ENCODE measurements at regions of chr16 and their contacts with region 1.

Region 1: DNA sequence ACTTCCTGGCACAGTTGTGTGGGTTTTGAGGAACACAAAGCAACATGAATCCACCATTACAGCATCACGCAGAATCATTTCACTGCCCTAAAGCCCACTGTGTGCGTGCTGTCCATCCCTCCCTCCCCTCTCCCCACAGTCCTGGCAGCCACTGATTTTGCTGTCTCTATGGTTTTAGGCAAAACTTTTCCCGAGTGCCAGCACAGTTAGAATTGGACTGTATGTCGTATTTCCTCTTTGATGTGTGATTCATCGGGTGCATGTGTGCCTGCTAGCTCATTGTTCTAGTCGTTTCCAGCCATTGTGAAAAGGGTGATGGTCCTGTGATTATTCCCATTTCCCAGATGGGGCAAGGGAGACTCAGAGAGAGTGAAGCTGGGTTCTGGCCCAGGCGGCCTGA is 12.7 kb downstream of the KLHL36 start:
- DNase-seq: no peak
- H3K4me3 ChIP-seq: no peak overlapping the region
- H3K27ac ChIP-seq: no peak overlapping the region
- H3K4me1 ChIP-seq: no peaks in the 10 kb centered on the region
- H3K27me3 ChIP-seq: no peaks in the 10 kb centered on the region
- CTCF ChIP-seq: no peak
- POLR2A ChIP-seq: no peak

Region 2: DNA sequence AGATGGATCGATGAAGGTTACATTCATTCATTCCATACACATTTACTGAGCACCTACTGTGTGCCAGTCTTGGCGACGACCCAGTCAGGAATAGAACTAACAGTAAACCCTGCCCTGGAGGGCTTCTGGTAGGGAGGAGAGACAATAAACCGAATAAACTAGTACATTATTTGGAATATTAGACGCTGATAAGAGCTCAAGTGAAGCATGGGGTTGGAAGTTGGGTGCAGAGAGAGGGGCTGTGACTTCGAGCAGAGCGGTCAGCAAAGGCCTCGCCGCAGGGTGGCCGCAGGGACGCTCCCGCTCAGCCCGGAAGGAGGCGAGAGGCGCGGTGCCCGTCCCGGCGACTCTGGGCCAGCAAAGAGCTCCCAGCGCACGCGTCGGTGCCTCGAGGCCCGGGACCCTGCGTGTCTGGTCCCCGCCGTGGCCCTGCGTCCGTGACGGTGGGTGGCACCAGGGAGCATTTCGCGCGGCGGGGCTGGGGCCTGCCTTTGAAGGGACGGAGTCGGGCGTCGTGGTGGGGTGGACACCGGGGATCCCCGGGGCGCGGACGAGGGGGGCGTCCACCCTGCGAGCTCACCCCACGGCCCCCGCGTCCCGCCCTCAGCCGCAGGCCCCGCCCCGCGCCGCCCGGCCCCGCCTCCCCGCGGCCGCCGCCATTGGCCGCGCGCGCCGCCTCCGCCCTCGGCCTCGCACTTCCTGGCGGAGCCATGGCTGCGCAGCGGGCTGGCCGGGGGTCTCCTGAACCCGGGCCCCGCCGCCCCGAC is 13.0 kb before region 1 on chr16 and contains the start of gene KLHL36:
- intact Hi-C with region 1: no loop called
- DNase-seq: peak in 1 of 2 donors; percentile 36
- H3K4me3 ChIP-seq: peak within 1 kb of the TSS; percentile 70 to 97 (median 74)
- H3K27ac ChIP-seq: peak within 1 kb of the TSS; percentile 75 to 98
- H3K4me1 ChIP-seq: peaks cover under 1 to 5% of the 10 kb centered on the region in 2 donors
- H3K27me3 ChIP-seq: no peaks in the 10 kb centered on the region
- CTCF ChIP-seq: no peak
- POLR2A ChIP-seq: no peak
- total RNA-seq, gene KLHL36: 51.5 to 61.4 (median 59.4) TPM

Region 3: GRCh38 chr16:84672276-84673202 is 11.6 kb after region 1 on chr16:
- intact Hi-C with region 1: loop called (anchors 1 kb)
- DNase-seq: peak; percentile 40 to 78
- H3K4me3 ChIP-seq: no peak overlapping the region
- H3K27ac ChIP-seq: no peak overlapping the region
- H3K4me1 ChIP-seq: no peaks in the 10 kb centered on the region
- H3K27me3 ChIP-seq: no peaks in the 10 kb centered on the region
- CTCF ChIP-seq: peak; percentile 70 to 89 (median 82)
- POLR2A ChIP-seq: no peak

Region 4: GRCh38 chr16:84720177-84720579 is 59.2 kb after region 1 on chr16:
- intact Hi-C with region 1: no loop called
- DNase-seq: no peak
- H3K4me3 ChIP-seq: no peak overlapping the region
- H3K27ac ChIP-seq: no peak overlapping the region
- H3K4me1 ChIP-seq: peaks cover 0 to 7% of the 10 kb centered on the region in 2 donors
- H3K27me3 ChIP-seq: no peaks in the 10 kb centered on the region
- CTCF ChIP-seq: no peak
- POLR2A ChIP-seq: no peak